G401 (cell line): ENCODE measurements at regions of chr10 and their contacts with region 1.

Region 1: DNA sequence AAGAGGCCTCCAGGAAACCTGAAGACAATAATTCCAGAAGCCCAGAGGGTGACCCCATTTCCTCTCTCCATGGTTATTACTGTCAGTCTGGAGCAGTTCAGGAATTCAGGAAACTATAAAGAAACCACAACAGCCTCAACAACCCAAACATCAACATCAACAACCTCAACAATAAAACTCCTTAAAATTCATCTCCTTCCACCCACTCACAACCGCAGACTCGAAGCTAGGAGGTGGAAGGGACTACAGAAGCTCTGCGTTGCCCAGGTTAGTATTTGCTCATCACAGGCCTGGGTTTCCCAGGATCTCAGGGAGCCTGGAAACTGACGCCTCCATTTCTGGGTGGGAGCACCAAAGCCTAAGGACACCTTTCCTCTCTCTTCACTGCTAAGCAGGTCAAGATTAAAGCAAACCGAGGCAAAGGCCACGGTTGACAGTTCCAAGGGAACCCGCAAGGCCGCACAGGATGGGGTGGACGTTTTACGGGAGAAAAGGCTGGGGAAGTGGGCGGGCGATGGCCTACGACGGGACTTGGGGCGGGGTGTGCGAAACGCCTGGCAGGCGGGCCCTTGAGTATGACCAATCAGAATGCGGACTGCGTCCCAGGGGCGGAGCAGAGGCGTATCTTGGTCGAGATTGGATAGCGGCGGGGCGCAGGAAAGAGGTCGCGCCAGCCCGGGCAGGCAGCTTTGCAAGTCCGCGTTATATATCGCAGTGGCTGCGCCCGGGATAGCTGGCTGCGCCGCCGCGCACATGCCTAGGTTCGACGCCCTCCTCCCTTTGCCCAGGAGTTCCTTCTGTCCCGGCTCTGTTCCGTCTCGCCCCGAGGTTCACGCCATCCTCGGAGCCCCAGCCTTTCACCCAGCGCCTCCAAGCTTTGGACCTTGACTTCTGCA is at the start of gene ELOVL3:
- DNase-seq: peak; percentile 97
- total RNA-seq, gene ELOVL3: 2.1 and 3.3 TPM in 2 replicates

Region 2: DNA sequence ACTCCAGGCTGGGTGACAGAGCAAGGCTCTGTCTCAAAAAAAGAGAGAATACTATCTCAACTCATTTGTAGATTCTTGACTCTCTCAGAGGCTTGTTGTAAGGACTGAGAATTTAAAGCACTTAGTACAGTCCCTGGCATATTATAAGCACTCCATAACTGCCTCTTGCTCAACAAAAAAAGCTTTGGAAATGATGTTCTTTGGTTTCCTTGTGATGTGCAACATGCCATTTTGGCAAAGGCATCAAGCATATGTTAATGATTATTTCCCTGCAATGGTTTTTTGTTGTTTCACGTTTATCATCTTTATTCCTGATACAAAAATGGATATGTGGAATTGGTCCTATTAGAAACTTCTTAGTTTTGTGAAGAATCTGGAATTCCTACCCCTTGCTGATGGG is 58.0 kb before region 1 on chr10:
- in situ Hi-C with region 1: loop called (anchors 5 kb)
- DNase-seq: no peak

Region 3: GRCh38 chr10:102262744-102263370 is 37.0 kb after region 1 on chr10:
- in situ Hi-C with region 1: no loop called
- DNase-seq: no peak

Region 4: GRCh38 chr10:102484021-102484420 is 258.1 kb after region 1 on chr10:
- in situ Hi-C with region 1: loop called (anchors 5 kb)
- DNase-seq: no peak